BJ (cell line): ENCODE measurements at regions of chr12 and their contacts with region 1.

Region 1: GRCh38 chr12:54701940-54702592 is 53.9 kb upstream of the DCD start:
- DNase-seq: no peak
- H3K4me3 ChIP-seq: no peak overlapping the region
- H3K27me3 ChIP-seq: no peaks in the 10 kb centered on the region; the same call in 1 of the 2 replicates
- CTCF ChIP-seq: peak; percentile 56

Region 2: DNA sequence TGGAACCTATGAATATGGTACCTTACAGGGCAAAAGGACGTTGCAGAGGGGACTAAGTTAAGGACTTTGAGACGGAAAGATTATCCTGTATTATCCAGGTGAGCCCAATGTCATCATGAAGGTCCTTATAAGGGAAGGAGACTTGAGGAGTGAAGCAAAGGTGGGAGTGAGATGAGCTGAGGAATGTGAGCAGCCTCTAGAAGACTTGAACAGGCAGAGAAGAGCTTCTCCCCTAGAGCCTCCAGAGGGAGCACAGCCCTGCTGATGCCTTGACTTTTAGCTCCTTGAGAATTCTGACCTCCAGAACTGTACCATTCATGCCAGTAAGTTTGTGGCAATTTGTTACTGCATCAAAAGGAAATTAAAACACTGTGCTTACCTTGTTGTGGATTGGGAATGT is 12.1 kb before region 1 on chr12:
- CTCF ChIA-PET with region 1: interaction called, 15 read pairs
- POLR2A ChIA-PET with region 1: no interaction called
- DNase-seq: no peak
- H3K4me3 ChIP-seq: no peak overlapping the region
- H3K27me3 ChIP-seq: no peaks in the 10 kb centered on the region
- CTCF ChIP-seq: peak; percentile 21; the same call in 1 of the 2 replicates